ENCODE measurements at regions of chr22 and their contacts with region 1.

Region 1: DNA sequence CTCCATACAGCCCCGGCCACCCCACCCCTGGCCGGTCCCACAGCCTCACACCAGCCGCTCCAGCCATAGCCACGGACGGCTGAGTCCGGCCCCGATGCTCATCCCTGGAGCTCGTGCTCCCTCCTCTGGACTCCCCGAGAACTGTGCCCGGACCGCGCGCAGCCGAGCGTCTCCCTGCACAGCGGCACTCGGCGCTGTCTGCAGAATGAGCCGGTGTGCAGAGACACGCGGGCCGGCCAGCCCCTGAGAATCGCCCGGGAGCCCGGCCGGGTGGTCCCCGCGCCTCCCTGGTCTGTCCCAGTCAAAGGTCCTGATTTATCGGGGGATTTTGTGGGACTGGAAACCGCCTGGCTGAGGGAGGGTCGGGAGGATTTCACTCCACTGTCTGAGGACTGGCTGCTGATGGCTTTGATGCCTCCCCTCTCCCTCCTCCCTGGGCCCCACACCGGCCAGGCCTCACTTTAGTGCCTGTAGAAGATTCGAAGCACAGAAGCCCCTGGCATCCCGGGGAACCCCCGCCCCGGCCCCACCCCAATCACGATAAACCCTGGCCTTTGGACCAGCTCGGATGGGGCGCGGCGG is 102.7 kb downstream of the BRD1 start:
- DNase-seq: peak; percentile 37 to 83 (median 68)
- ATAC-seq: peak; percentile 84
- H3K4me3 ChIP-seq: peak overlapping the region; percentile 60 to 74
- H3K4me3 Mint-ChIP-seq: peak overlapping the region; percentile 76
- H3K27ac ChIP-seq: peak overlapping the region; percentile 40 to 46
- H3K27ac Mint-ChIP-seq: peak overlapping the region; percentile 60
- H3K4me1 ChIP-seq: peaks cover 20% of the 10 kb centered on the region
- H3K4me1 Mint-ChIP-seq: peaks cover 16% of the 10 kb centered on the region
- H3K27me3 ChIP-seq: peaks cover 9 to 13% of the 10 kb centered on the region in 2 experiments
- H3K27me3 Mint-ChIP-seq: peaks cover 21% of the 10 kb centered on the region
- CTCF ChIP-seq: peak; percentile 74

Region 2: DNA sequence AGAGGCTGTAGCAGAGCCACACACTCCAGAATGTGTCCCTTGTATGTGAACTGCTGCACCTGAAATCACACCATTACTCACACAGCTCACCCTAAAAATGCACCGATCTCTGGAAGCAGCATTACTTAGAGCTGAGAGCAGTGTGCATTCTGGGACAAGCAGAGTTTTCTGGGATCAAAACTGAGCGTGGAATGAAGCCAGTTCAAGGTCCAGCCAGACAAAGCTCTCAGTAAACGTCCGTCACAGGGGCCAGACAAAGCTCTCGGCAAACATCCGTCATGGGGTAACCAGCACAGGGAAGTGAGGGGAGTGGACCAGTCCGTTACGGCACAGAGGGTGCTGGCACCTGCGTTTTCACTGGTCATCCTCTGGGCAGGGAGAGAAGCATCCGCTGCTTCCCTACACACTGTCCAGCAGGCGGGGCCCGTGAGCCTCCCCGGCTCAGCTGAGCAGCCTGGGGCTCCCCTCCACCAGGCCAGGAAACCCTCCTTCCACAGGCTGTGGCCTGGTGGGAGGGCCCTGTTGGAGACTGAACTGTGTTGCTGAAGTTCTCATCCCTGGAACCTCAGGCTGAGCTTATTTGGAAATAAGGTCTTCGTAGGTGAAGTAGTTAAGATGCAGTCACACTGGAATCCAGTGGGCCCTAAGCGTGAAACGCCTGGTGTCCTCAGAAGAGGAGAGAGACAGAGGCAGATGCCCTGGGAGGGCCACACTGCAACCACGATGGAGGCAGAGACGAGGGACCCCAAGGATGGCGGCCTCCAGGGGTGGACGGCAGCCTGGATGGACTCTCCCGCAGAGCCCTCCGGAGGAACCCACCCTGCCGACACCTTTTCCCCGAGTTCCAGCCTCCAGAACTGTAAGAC is 781.2 kb before region 1 on chr22:
- CTCF ChIA-PET with region 1: no interaction called
- POLR2A ChIA-PET with region 1: no interaction called
- intact Hi-C with region 1: loop called in 1 of 2 experiments (anchors 10 kb)
- DNase-seq: peak in 1 of 9 experiments; percentile 46
- ATAC-seq: no peak
- H3K4me3 ChIP-seq: no peak overlapping the region
- H3K4me3 Mint-ChIP-seq: no peak overlapping the region
- H3K27ac ChIP-seq: no peak overlapping the region
- H3K27ac Mint-ChIP-seq: no peak overlapping the region
- H3K4me1 ChIP-seq: no peaks in the 10 kb centered on the region
- H3K4me1 Mint-ChIP-seq: no peaks in the 10 kb centered on the region
- H3K27me3 ChIP-seq: no peaks in the 10 kb centered on the region
- H3K27me3 Mint-ChIP-seq: peaks cover 2% of the 10 kb centered on the region
- CTCF ChIP-seq: no peak

Region 3: DNA sequence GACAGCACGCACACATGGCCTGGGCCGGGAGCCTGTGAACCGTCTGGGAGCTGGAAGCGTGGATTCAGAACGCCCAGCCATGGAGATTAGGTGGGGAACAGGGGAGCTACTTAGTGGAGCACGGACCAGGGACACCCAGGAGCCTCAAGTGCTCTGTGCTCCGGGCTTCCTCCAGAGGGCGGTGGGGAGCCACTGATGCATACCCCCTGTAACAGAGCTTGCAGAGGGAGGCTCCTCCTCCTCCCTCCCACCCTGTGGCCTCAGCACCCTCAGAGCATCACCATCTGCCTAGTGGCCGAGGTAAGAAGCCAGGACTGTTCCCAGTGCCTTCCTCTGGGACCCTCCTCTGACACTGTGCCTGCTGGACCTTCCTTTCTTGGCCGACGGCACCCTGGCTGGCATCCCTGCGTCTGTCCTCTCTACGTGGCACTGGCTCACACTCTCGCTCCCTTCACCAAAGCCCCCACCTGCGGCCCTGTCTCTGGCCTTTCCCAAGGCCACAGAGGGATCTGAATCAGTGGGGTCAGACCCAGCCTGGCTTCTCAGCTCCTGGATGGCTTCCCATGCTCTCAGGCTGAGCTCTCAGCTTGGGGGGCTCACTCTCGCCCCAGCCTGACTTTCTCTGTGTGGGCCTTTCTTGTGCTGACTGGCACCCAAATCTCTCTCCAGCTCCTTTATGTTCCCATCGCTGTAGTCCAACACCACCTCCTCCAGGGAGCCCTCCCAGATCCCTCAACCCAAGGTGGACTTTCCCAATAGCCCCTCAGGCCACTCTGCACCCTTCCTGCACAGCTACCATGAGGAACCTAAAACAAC is 678.2 kb before region 1 on chr22:
- CTCF ChIA-PET with region 1: no interaction called
- POLR2A ChIA-PET with region 1: no interaction called
- intact Hi-C with region 1: loop called in 1 of 2 experiments (anchors 10 kb)
- DNase-seq: peak in 3 of 9 experiments; percentile 22 to 26 (median 24)
- ATAC-seq: no peak
- H3K4me3 ChIP-seq: no peak overlapping the region
- H3K4me3 Mint-ChIP-seq: no peak overlapping the region
- H3K27ac ChIP-seq: no peak overlapping the region
- H3K27ac Mint-ChIP-seq: no peak overlapping the region
- H3K4me1 ChIP-seq: no peaks in the 10 kb centered on the region
- H3K4me1 Mint-ChIP-seq: no peaks in the 10 kb centered on the region
- H3K27me3 ChIP-seq: no peaks in the 10 kb centered on the region
- H3K27me3 Mint-ChIP-seq: peaks cover 8% of the 10 kb centered on the region
- CTCF ChIP-seq: no peak

Region 4: GRCh38 chr22:49305214-49305909 is 419.6 kb before region 1 on chr22:
- CTCF ChIA-PET with region 1: interaction called, 3 read pairs
- POLR2A ChIA-PET with region 1: no interaction called
- intact Hi-C with region 1: loop called (anchors 2 to 10 kb)
- DNase-seq: peak; percentile 27 to 78 (median 52)
- ATAC-seq: no peak
- H3K4me3 ChIP-seq: no peak overlapping the region
- H3K4me3 Mint-ChIP-seq: no peak overlapping the region
- H3K27ac ChIP-seq: no peak overlapping the region
- H3K27ac Mint-ChIP-seq: no peak overlapping the region
- H3K4me1 ChIP-seq: no peaks in the 10 kb centered on the region
- H3K4me1 Mint-ChIP-seq: no peaks in the 10 kb centered on the region
- H3K27me3 ChIP-seq: peaks cover 0 to 2% of the 10 kb centered on the region in 2 experiments
- H3K27me3 Mint-ChIP-seq: peaks cover 35% of the 10 kb centered on the region
- CTCF ChIP-seq: peak; percentile 87

Measured in CD8-positive, alpha-beta T cell (primary cell).